Prostate gland (tissue), 2 donors: ENCODE measurements at regions of chr3 and their contacts with region 1.

Region 1: GRCh38 chr3:127455541-127456450 is 134.7 kb downstream of the TPRA1 start:
- DNase-seq: peak; percentile 47
- H3K4me3 ChIP-seq: no peak overlapping the region
- H3K27ac ChIP-seq: no peak overlapping the region
- H3K4me1 ChIP-seq: peaks cover 13% of the 10 kb centered on the region
- H3K27me3 ChIP-seq: peaks cover 25% of the 10 kb centered on the region
- CTCF ChIP-seq: peak; percentile 63 to 97 (median 86)
- POLR2A ChIP-seq: no peak

Region 2: DNA sequence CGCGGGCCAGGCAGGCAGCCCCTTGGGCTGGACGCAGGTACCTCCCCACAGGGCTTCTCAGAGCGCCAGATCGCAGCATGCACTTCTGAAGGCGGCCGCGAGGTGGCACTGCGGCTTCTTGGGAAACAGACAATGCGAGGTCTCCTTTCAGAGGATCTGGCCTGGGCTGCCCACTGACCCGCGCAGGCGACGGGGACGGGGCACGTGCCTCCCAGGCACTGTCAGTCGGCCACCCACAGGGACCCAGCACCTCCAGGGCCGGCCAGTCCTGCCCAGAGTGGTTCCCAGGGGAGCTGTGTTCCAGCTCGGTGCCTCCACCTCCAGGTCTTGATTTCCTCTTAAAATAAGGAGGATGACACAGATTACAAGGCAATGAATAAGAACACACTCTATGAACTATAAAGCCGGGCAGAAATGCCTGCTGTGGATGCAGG is 776.5 kb before region 1 on chr3:
- intact Hi-C with region 1: loop called (anchors 2 kb)
- DNase-seq: peak; percentile 73
- H3K4me3 ChIP-seq: no peak overlapping the region
- H3K27ac ChIP-seq: no peak overlapping the region
- H3K4me1 ChIP-seq: peaks cover 5% of the 10 kb centered on the region
- H3K27me3 ChIP-seq: peaks cover 5% of the 10 kb centered on the region
- CTCF ChIP-seq: peak; percentile 90 to 94 (median 93)
- POLR2A ChIP-seq: no peak

Region 3: GRCh38 chr3:126752303-126752842 is 703.4 kb before region 1 on chr3:
- intact Hi-C with region 1: loop called (anchors 2 kb)
- DNase-seq: peak; percentile 74
- H3K4me3 ChIP-seq: no peak overlapping the region
- H3K27ac ChIP-seq: peak overlapping the region; percentile 58 to 61
- H3K4me1 ChIP-seq: no peaks in the 10 kb centered on the region
- H3K27me3 ChIP-seq: no peaks in the 10 kb centered on the region
- CTCF ChIP-seq: peak; percentile 43 to 91 (median 84)
- POLR2A ChIP-seq: no peak

Region 4: DNA sequence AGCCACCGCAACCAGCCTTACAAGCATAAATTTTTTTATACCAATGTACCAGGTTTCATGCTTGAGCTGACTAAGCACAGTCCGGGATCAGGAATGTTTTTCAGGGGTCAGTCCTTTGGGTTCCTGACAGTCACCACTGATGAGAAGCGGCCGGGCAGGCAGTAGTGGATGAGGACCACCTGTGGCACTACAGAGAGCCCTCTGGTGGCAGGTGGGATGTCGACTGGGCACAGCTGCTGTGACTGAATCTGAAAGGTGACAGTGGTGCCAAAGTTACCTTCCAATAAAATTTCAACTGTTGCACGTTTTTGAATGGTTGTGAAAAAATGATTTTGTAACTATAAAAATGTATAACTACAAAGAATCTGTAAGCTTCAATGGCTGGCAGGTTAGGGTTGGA is 100.8 kb after region 1 on chr3:
- intact Hi-C with region 1: no loop called
- DNase-seq: no peak
- H3K4me3 ChIP-seq: no peak overlapping the region
- H3K27ac ChIP-seq: no peak overlapping the region
- H3K4me1 ChIP-seq: no peaks in the 10 kb centered on the region
- H3K27me3 ChIP-seq: no peaks in the 10 kb centered on the region
- CTCF ChIP-seq: no peak
- POLR2A ChIP-seq: no peak